GM10248 (cell line): ENCODE measurements at regions of chr20 and their contacts with region 1.

Region 1: GRCh38 chr20:11204926-11205768 is 531.3 kb upstream of the JAG1 start:
- DNase-seq: peak; percentile 24
- CTCF ChIP-seq: peak; percentile 74

Region 2: GRCh38 chr20:10883166-10883565 is 322.0 kb before region 1 on chr20:
- CTCF ChIA-PET with region 1: no interaction called
- POLR2A ChIA-PET with region 1: no interaction called
- DNase-seq: no peak
- CTCF ChIP-seq: no peak

Region 3: GRCh38 chr20:10924644-10925201 is 280.4 kb before region 1 on chr20:
- CTCF ChIA-PET with region 1: no interaction called
- POLR2A ChIA-PET with region 1: no interaction called
- DNase-seq: no peak
- CTCF ChIP-seq: no peak

Region 4: GRCh38 chr20:11178946-11179654 is 26.0 kb before region 1 on chr20:
- CTCF ChIA-PET with region 1: no interaction called
- POLR2A ChIA-PET with region 1: no interaction called
- DNase-seq: no peak
- CTCF ChIP-seq: no peak

Region 5: DNA sequence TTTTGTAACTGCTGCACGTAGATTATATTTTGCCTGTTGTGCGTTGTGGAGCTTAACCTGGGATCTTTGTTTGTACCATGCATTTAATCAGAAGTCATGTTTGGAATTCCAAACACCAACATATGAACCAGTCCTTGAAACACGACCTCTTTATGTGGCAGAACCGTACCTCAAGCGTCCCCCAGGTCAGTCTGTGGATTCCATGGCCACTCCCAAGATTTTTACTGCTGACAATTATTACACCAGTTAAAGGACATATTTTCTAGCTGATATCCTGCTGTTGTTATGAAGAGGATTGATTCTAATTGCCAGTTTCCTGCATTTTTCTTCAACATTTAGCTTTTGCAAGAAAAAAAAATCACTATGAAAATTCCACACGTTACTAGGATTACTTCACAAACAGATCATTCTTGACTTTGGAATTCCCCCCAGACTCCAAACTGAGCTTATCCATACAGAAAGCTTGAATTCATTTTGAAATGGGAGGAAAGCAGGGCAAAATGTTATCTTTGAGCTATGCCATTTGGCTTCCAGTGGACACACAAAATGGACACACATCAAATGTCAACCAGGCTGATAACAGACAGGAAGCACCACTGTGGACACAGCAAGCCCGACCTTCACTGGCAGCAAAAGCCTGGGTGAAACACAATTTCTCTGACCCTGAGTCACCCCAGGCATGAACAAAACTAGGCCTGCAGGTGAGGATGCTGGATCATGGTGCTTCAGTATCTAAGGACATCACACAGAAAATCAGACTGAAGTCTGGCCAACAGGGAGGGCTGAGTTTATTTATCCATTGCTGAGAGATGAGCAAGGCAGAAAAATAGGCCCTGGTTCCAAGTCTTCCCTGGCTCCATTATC is 11.5 kb after region 1 on chr20:
- CTCF ChIA-PET with region 1: interaction called, 70 read pairs
- POLR2A ChIA-PET with region 1: no interaction called
- DNase-seq: no peak
- CTCF ChIP-seq: no peak

Region 6: DNA sequence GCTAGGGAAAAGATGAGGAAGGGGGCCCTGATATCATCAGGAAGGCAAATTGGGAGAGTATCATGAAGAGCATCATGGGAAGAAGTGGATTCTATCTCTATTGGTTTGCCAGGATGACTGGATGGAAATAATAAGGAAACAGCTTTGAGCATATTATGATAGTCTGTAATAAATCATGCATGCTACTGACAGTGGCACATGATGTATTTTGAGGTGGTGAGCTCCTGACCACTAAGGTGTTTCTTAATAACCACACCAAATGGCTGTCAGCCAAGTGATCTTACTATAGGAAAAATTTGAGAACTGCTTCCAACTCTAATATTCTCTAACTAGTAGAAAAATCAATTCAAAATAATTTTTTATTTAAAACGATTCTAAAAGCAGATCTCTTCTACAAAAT is 17.1 kb after region 1 on chr20:
- CTCF ChIA-PET with region 1: interaction called, 70 read pairs
- POLR2A ChIA-PET with region 1: no interaction called
- DNase-seq: no peak
- CTCF ChIP-seq: no peak

Region 7: DNA sequence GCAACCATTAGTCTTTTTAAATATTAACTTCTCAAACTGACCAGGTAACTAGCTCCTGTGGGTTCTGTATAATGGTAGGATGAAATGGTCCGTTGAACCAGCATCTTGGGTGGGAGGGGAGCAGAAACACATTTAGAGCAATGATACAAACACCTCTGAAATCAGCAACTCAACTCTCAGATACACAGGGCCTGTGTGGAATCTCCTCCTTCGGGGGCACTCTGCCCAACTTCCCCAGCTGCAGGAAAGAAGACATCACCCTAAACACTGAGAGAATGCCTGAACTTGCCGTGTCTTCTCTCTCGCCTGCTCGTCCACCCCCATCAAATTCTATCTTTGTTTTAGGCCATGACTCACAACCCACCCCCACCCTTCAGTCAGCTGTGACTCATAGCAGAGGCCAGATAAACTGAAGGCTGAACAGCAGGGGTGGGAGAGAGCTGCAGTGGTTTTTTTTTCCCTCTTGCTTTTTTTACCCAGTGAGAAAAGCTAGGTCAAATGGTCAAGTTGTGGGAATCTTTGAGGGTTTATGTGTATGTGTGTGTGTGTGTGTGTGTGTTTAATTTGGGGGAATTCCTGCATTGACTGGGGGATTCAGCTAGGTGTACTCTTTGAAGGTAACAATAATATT is 62.1 kb after region 1 on chr20:
- CTCF ChIA-PET with region 1: interaction called, 12 read pairs
- POLR2A ChIA-PET with region 1: no interaction called
- DNase-seq: peak; percentile 68
- CTCF ChIP-seq: no peak